Activated CD8-positive, alpha-beta T cell treated with anti-CD3 and anti-CD28 coated beads, Interleukin-2, amount 10 ng/mL, durations not matched to agents 7 days and 5 days (primary cell): ENCODE measurements at regions of chr15 and their contacts with region 1.

Region 1: GRCh38 chr15:38699633-38700230 is 135.1 kb upstream of the RASGRP1 start:
- DNase-seq: peak; percentile 87
- ATAC-seq: peak; percentile 34
- H3K4me3 Mint-ChIP-seq: peak overlapping the region; percentile 31
- H3K27ac Mint-ChIP-seq: peak overlapping the region; percentile 84
- H3K4me1 Mint-ChIP-seq: peaks cover 62% of the 10 kb centered on the region
- H3K27me3 Mint-ChIP-seq: no peaks in the 10 kb centered on the region

Region 2: DNA sequence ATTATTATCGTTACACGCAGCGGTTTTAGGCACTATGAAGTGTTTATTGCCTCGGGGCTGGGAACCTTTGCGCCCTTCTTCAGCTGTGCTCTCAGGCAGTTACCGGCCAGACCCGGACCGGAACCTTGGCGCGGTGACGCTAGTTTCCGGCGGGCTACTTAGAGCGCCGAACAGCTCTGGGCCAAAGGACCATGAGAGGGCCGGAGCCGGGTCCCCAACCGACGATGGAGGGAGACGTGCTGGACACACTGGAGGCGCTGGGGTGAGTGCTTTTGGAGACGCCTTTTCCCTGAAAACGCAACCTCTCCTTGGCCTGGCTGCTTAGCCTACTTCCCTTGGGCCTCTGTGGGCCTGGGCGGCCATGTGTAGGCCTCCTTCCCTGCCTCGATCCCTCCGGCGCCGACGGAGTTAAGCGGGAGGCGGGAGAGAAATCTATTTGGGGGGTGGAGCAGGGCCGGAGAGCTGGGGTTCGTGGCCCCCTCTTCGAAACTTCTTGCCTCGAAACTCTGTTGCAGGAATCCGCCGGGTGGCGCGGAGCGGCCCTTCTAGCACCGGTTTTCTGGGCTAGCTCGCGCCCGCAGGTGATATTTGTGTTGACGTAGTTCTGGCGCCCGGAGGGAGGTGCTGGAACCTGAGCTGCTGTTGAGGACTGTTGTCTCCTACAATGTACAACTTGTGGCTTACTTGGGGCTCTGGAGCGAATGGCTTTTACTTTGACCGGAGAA is 245.6 kb before region 1 on chr15 and contains the start of gene FAM98B:
- CTCF ChIA-PET with region 1: interaction called, 84 read pairs
- POLR2A ChIA-PET with region 1: interaction called, 11 read pairs
- DNase-seq: peak; percentile 89
- ATAC-seq: peak; percentile 92
- H3K4me3 Mint-ChIP-seq: peak within 1 kb of the TSS; percentile 96
- H3K27ac Mint-ChIP-seq: peak within 1 kb of the TSS; percentile 92
- H3K4me1 Mint-ChIP-seq: peaks cover 29% of the 10 kb centered on the region
- H3K27me3 Mint-ChIP-seq: peaks cover 9% of the 10 kb centered on the region
- total RNA-seq, gene FAM98B: 42.8 to 43.9 TPM

Region 3: GRCh38 chr15:38479266-38479665 is 220.5 kb before region 1 on chr15:
- CTCF ChIA-PET with region 1: interaction called, 130 read pairs
- POLR2A ChIA-PET with region 1: interaction called, 5 read pairs
- DNase-seq: no peak
- ATAC-seq: no peak
- H3K4me3 Mint-ChIP-seq: no peak overlapping the region
- H3K27ac Mint-ChIP-seq: no peak overlapping the region
- H3K4me1 Mint-ChIP-seq: peaks cover 18% of the 10 kb centered on the region
- H3K27me3 Mint-ChIP-seq: no peaks in the 10 kb centered on the region

Region 4: GRCh38 chr15:38508647-38509046 is 191.1 kb before region 1 on chr15:
- CTCF ChIA-PET with region 1: interaction called, 30 read pairs
- POLR2A ChIA-PET with region 1: interaction called, 3 read pairs
- DNase-seq: no peak
- ATAC-seq: no peak
- H3K4me3 Mint-ChIP-seq: no peak overlapping the region
- H3K27ac Mint-ChIP-seq: peak overlapping the region; percentile 60
- H3K4me1 Mint-ChIP-seq: peaks cover 13% of the 10 kb centered on the region
- H3K27me3 Mint-ChIP-seq: no peaks in the 10 kb centered on the region

Region 5: GRCh38 chr15:38547255-38547997 is 152.3 kb before region 1 on chr15:
- CTCF ChIA-PET with region 1: interaction called, 15 read pairs
- POLR2A ChIA-PET with region 1: no interaction called
- DNase-seq: peak; percentile 22
- ATAC-seq: no peak
- H3K4me3 Mint-ChIP-seq: no peak overlapping the region
- H3K27ac Mint-ChIP-seq: peak overlapping the region; percentile 59
- H3K4me1 Mint-ChIP-seq: peaks cover 76% of the 10 kb centered on the region
- H3K27me3 Mint-ChIP-seq: no peaks in the 10 kb centered on the region

Region 6: DNA sequence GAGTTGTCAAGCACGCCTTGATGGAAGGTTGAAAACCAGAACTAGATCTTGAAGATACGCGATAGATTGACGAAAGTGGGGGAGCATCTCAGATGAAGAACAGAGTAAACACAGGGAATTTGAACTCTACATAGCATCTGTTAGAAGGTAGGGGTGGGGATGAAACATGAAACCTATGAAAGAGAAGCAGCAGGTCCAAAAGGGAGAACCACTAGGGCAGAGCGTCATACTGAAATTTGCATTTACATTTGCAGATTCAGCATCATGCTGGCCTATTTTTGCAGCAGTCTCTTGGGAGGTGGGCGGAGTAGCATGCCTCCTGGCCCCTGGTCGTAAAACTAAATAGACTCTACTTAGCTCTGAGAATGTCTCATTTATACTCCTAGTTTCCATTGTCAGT is 89.0 kb before region 1 on chr15:
- CTCF ChIA-PET with region 1: interaction called, 18 read pairs
- POLR2A ChIA-PET with region 1: interaction called, 3 read pairs
- DNase-seq: peak; percentile 68
- ATAC-seq: peak; percentile 60
- H3K4me3 Mint-ChIP-seq: peak overlapping the region; percentile 71
- H3K27ac Mint-ChIP-seq: peak overlapping the region; percentile 98
- H3K4me1 Mint-ChIP-seq: peaks cover 73% of the 10 kb centered on the region
- H3K27me3 Mint-ChIP-seq: no peaks in the 10 kb centered on the region

Region 7: DNA sequence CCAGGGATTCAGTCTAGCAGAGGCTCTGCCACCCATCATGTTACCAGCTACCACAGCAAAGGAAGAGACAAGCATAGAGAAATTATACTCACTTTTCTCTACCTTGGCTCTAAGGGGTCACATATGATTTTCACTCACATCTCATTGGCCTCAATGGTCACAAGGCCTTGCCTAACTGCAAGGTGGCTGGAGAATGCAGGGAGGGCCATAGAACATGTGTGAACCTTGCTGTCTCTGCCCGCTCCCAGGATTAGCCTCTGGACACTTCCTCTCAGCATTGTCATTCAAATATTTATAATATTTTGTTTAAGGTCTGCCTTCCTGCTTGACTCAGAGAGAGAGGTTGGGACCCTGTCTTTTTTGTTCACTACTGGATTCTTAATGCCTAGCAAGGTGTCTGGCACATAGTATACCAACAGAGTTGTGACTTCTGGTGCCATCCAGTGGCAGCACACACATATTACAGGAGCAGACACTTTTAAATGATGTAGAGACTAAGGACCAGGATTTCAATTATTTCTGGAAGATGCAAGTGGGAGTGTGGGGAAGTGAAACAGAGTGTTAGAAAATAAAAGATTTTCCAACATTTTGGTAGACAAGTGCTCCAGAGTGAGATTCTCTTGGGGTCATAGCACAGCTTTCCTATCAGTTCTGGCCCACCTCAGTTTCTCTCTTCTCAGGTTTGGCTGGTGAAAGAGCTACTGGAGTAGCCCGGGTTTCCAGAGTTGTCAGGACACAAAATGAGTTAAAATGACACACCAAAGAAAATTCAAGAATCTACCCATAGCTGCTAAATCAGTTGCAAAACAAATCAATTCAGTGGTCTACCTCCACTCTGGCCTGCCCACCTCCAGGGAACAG is 16.1 kb before region 1 on chr15:
- CTCF ChIA-PET with region 1: interaction called, 357 read pairs
- POLR2A ChIA-PET with region 1: interaction called, 83 read pairs
- DNase-seq: peak; percentile 85
- ATAC-seq: peak; percentile 56
- H3K4me3 Mint-ChIP-seq: peak overlapping the region; percentile 64
- H3K27ac Mint-ChIP-seq: peak overlapping the region; percentile 92
- H3K4me1 Mint-ChIP-seq: peaks cover 71% of the 10 kb centered on the region
- H3K27me3 Mint-ChIP-seq: no peaks in the 10 kb centered on the region